ENCODE measurements at regions of chr19 and their contacts with region 1.

Region 1: DNA sequence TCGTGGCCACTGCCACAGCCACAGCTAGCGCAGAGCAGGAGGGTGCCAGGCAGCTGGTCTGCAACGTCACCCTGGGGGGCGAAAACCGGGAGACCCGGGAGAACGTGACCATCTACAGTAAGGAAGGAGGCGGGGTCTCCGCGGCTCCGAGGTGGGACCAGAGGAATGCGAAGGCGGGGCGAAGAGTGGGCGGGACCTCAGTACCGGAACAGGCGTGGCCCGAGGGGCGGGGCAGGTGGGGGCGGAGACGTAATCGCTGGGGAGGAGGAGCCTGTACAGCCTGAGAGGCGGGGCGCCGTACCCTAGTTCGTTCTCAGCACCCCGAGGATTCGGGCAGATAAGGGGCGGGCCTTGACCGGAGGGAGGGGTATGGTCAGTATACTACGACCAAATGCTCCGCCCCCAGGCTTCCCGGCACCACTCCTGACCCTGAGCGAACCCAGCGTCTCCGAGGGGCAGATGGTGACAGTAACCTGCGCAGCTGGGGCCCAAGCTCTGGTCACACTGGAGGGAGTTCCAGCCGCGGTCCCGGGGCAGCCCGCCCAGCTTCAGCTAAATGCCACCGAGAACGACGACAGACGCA is 2.5 kb downstream of the ICAM5 start:
- DNase-seq: peak; percentile 72
- H3K4me3 Mint-ChIP-seq: peak overlapping the region; percentile 79
- H3K27ac Mint-ChIP-seq: no peak overlapping the region
- H3K4me1 Mint-ChIP-seq: peaks cover 53% of the 10 kb centered on the region
- H3K27me3 Mint-ChIP-seq: peaks cover 60% of the 10 kb centered on the region

Region 2: GRCh38 chr19:10517760-10518443 is 225.6 kb after region 1 on chr19:
- intact Hi-C with region 1: loop called (anchors 5 kb)
- DNase-seq: no peak
- H3K4me3 Mint-ChIP-seq: peak overlapping the region; percentile 10
- H3K27ac Mint-ChIP-seq: no peak overlapping the region
- H3K4me1 Mint-ChIP-seq: peaks cover 23% of the 10 kb centered on the region
- H3K27me3 Mint-ChIP-seq: peaks cover 62% of the 10 kb centered on the region

Measured in activated T-helper 2 cell treated with anti-CD3 and anti-CD28 coated beads, Interferon-gamma antibody, Interleukin-2, Interleukin-4, amounts not matched to agents 10 μg/mL and 5 μg/mL and 100 μg/mL, durations not matched to agents 14 hours and 24 hours and 36 hours (primary cell).